Lower leg skin (tissue), 4 donors: ENCODE measurements at regions of chr1 and their contacts with region 1.

Region 1: GRCh38 chr1:166484871-166485270 is 318.1 kb upstream of the FAM78B start:
- DNase-seq: no peak
- H3K4me3 ChIP-seq: no peak overlapping the region
- CTCF ChIP-seq: no peak
- POLR2A ChIP-seq: no peak

Region 2: GRCh38 chr1:165924117-165924516 is 560.8 kb before region 1 on chr1:
- intact Hi-C with region 1: loop called (anchors 5 kb)
- DNase-seq: no peak
- H3K4me3 ChIP-seq: no peak overlapping the region
- CTCF ChIP-seq: no peak
- POLR2A ChIP-seq: no peak

Region 3: GRCh38 chr1:166330096-166330495 is 154.8 kb before region 1 on chr1:
- intact Hi-C with region 1: no loop called
- DNase-seq: no peak
- H3K4me3 ChIP-seq: no peak overlapping the region
- CTCF ChIP-seq: no peak
- POLR2A ChIP-seq: no peak

Region 4: DNA sequence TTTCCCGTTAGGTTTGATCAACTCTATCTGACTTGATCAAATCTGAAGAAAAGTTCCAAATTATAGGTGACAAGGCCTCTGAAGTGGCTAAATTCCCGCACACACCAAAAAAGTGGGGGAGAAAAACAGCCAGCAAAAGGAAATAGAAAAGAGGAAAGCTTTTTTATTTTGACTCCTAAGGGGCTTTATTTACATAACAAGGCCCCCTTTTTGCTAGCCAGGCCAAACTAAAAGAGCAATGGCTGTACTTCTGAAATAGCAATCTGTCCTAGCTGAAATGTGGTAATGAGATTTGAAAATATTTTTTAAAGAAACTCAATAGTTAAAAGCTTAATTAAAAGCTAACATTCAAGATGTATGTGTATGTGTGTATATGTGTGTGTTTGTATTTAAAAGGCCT is 42.9 kb after region 1 on chr1:
- intact Hi-C with region 1: no loop called
- DNase-seq: no peak
- H3K4me3 ChIP-seq: no peak overlapping the region
- CTCF ChIP-seq: no peak
- POLR2A ChIP-seq: no peak

Region 5: DNA sequence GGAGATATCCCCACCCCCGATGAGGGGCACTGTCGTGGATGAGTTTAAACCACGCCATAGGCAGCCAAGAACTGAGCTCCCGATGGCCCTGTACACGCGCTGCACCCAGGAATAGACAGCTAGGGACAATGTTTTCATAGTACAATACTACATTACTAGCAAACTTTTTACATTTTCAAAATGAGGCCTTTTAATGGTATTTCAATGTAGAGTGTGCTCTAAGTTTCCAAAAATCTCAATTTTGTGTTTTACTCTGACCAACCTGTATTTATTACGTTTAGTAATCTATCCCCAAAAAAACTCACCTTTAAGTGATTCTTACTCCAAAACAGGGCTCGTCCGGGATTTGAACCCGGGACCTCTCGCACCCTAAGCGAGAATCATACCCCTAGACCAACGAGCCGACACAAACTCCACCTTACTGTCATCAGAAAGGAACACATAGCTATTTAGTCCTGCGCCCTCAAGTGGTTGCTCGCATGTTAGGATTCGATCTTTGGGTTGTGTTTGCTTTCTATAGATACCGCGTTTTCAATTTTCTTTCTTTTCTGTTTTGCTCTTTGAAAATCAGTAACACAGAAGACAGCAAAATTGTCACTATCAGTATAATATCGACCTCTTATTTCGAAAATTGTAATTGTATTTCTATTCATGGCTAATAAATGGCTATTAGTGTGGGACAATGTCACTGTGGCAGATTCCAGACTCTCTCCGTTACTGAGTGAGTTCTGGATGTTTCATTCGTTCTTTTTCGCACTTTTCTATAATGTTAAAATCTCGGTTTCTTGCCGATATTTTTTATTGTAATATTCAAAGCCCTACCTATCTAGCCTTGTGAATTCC is 1230.5 kb after region 1 on chr1:
- intact Hi-C with region 1: no loop called
- DNase-seq: peak; percentile 91 to 96
- H3K4me3 ChIP-seq: peak overlapping the region; percentile 44
- CTCF ChIP-seq: peak in 1 of 3 donors; percentile 90
- POLR2A ChIP-seq: no peak